Panc1 (cell line): ENCODE measurements at regions of chr1 and their contacts with region 1.

Region 1: DNA sequence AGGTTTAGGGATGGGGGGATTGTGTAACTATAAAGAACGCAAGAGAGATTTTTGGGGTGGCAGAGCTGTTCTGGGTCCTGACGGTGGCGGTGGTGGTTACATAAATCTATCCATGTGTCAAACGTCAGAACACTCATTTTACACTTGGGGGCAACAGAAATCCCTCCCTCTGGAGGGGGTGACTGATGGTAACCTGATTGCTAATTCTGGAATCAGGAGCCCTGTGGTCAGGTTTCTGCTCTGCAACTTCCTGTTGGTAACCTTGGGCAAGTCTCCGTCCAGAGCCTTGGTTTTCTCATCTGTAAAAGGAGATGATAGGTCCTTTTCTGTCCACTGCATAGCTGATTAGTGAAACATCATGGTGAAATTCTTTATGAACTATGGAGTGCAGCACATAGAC is 40.9 kb downstream of the ALPL start:
- DNase-seq: no peak
- ATAC-seq: no peak
- H3K4me3 ChIP-seq: no peak overlapping the region
- H3K27ac ChIP-seq: no peak overlapping the region
- H3K4me1 ChIP-seq: peaks cover 4% of the 10 kb centered on the region; the same call in 1 of the 2 replicates
- H3K27me3 ChIP-seq: no peaks in the 10 kb centered on the region
- CTCF ChIP-seq: no peak

Region 2: DNA sequence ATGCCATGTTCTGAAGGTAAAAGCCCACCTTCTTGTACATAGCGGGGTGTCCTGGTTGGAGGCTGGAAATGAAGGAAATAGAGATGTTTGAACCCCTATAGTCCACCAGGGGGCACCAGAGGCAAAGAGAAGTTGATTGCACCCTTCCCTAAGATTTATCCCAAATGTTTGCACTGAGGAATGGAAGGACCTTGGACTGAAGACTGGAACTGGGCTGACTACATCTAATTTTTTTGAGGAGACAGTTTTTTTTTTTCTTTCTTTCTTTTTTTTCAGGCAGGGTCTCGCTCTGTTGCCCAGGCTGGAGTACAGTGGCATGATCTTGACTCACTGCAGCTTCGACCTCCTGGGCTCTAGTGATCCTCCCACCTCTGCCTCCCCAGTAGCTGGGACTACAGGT is 318.1 kb before region 1 on chr1:
- CTCF ChIA-PET with region 1: no interaction called
- POLR2A ChIA-PET with region 1: interaction called, 13 read pairs
- in situ Hi-C with region 1: no loop called
- intact Hi-C with region 1: no loop called
- DNase-seq: no peak
- ATAC-seq: peak; percentile 83
- H3K4me3 ChIP-seq: no peak overlapping the region
- H3K27ac ChIP-seq: no peak overlapping the region
- H3K4me1 ChIP-seq: no peaks in the 10 kb centered on the region
- H3K27me3 ChIP-seq: no peaks in the 10 kb centered on the region
- CTCF ChIP-seq: peak; percentile 90

Region 3: DNA sequence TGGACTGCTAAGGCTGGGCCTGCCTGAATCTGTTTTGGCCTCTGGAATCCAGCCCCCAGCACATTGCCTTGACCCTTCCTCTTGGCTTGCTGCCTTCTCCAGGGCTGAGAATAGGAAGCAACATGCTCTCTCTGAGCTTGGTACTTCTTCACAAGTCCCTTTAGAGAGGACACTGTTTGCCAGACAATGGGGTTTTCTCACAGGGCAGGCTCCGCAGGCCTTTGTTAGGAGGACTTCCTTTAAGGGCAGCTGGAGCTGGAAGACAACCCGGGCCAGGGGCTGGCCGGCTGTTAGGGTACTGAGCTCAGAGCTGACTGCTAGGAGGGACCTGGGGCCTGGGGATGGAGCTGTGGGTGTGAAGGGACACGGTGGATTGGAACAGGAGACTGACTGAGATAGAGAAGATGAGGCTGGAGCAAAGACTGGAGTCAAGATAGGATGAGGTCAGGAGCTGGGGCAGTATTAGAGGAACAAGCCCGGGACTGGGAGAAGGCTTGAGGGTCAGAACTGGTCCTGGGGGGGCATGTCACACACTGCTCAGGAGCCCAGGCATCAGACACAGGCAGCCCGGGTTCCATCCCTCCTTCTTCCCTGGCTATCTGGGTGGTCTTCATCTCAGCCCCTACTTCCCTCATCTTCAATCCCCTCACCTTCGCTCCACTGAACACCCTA is 46.3 kb before region 1 on chr1:
- CTCF ChIA-PET with region 1: no interaction called
- POLR2A ChIA-PET with region 1: no interaction called
- in situ Hi-C with region 1: no loop called
- intact Hi-C with region 1: no loop called
- DNase-seq: no peak
- ATAC-seq: peak; percentile 37; the same call in 1 of the 2 replicates
- H3K4me3 ChIP-seq: no peak overlapping the region
- H3K27ac ChIP-seq: no peak overlapping the region
- H3K4me1 ChIP-seq: peaks cover 3% of the 10 kb centered on the region; the same call in 1 of the 2 replicates
- H3K27me3 ChIP-seq: no peaks in the 10 kb centered on the region
- CTCF ChIP-seq: no peak